ENCODE measurements at regions of chr2 and their contacts with region 1.

Region 1: DNA sequence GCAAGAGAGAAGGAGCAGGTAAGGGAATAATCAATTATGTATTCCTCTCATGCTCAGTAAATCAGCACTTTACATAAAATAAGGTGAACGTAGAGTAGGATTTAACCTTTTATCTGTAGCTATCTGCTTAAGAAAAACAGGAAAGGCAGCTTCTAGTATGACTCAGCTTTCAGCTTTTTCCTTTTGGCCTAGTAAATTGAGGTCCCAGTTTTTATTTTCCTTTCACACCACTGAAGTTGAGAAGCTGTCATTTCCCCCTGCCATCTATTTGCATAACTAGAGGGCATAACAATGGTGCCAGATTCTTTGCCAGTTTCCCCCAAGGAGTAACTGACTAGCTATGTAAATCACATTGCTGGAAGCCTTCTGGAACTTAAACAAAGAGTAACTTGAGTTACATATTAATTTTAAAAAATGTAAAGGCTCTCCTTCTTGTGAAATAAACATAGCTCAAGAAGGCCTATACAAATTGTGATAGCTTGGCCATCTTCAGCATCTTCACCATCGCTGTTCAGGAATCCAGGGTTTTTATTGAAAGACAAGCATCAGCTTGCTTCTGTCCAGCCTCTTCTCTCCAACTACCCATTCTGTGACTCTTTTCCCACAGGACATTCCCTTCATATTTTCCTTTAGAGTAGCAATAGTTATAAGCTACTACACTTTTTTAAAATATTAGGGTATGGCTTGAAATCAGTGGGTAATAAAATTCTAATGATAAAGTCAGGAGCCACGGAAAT is 97.0 kb downstream of the KYNU start:
- DNase-seq: no peak
- ATAC-seq: peak; percentile 61
- H3K4me3 ChIP-seq: no peak overlapping the region
- H3K27ac ChIP-seq: no peak overlapping the region
- H3K4me1 ChIP-seq: peaks cover 9% of the 10 kb centered on the region
- H3K27me3 ChIP-seq: no peaks in the 10 kb centered on the region
- CTCF ChIP-seq: no peak
- EP300 ChIP-seq: no peak
- POLR2A ChIP-seq: no peak
- RAD21 ChIP-seq: no peak

Region 2: DNA sequence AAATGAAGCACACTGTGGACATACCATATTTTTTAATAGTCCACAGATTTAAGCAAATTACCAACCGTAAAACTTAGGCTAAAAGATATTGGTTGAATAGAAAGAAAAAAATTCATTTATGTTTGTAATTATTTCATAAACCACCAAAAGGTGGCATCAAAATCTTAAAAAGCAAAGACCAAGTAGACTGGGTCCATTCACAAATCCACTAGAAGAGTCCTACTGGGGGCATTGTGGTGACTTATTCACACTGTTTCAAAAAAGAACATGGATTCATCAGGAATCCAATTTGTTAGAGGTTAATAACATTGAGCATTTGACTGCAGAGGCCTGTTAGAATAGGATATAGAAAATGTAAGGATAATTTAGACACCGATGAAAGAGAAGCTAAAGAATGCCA is 291.9 kb before region 1 on chr2:
- CTCF ChIA-PET with region 1: interaction called, 41 read pairs
- POLR2A ChIA-PET with region 1: no interaction called
- RAD21 ChIA-PET with region 1: interaction called, 11 read pairs
- SMC1A ChIA-PET with region 1: interaction called, 22 read pairs
- in situ Hi-C with region 1: no loop called
- intact Hi-C with region 1: no loop called
- DNase-seq: no peak
- ATAC-seq: peak; percentile 39; the same call in 2 of the 3 replicates
- H3K4me3 ChIP-seq: no peak overlapping the region
- H3K27ac ChIP-seq: no peak overlapping the region
- H3K4me1 ChIP-seq: no peaks in the 10 kb centered on the region
- H3K27me3 ChIP-seq: peaks cover 0 to 4% of the 10 kb centered on the region in 2 experiments; a peak in 1 of 4 replicates
- CTCF ChIP-seq: peak in 1 of 3 experiments; percentile 36; a peak in 1 of 6 replicates
- EP300 ChIP-seq: no peak
- POLR2A ChIP-seq: no peak
- RAD21 ChIP-seq: peak; percentile 79

Measured in GM12878 (cell line).